ENCODE measurements at regions of chr2 and their contacts with region 1.

Region 1: GRCh38 chr2:137838255-137839092 is 125.8 kb upstream of the HNMT start:
- DNase-seq: no peak
- H3K4me3 ChIP-seq: no peak overlapping the region
- H3K27ac ChIP-seq: no peak overlapping the region
- H3K4me1 ChIP-seq: peaks cover 0 to 4% (median 0%) of the 10 kb centered on the region in 4 donors
- H3K27me3 ChIP-seq: no peaks in the 10 kb centered on the region
- CTCF ChIP-seq: peak; percentile 59 to 73 (median 67)
- EP300 ChIP-seq: no peak
- POLR2A ChIP-seq: no peak

Region 2: GRCh38 chr2:136423516-136423996 is 1414.9 kb before region 1 on chr2:
- in situ Hi-C with region 1: loop called (anchors 25 kb)
- intact Hi-C with region 1: loop called (anchors 5 kb)
- DNase-seq: peak; percentile 70
- H3K4me3 ChIP-seq: peak overlapping the region in 3 of 4 donors; percentile 11 to 50 (median 29)
- H3K27ac ChIP-seq: no peak overlapping the region
- H3K4me1 ChIP-seq: peaks cover 0 to 10% (median 0%) of the 10 kb centered on the region in 4 donors
- H3K27me3 ChIP-seq: peaks cover 21% of the 10 kb centered on the region
- CTCF ChIP-seq: peak; percentile 70 to 81 (median 80)
- EP300 ChIP-seq: no peak
- POLR2A ChIP-seq: no peak

Region 3: GRCh38 chr2:136448432-136448831 is 1390.0 kb before region 1 on chr2:
- in situ Hi-C with region 1: loop called in 2 of 4 experiments (anchors 25 kb)
- intact Hi-C with region 1: no loop called
- DNase-seq: no peak
- H3K4me3 ChIP-seq: no peak overlapping the region
- H3K27ac ChIP-seq: no peak overlapping the region
- H3K4me1 ChIP-seq: no peaks in the 10 kb centered on the region
- H3K27me3 ChIP-seq: no peaks in the 10 kb centered on the region
- CTCF ChIP-seq: no peak
- EP300 ChIP-seq: no peak
- POLR2A ChIP-seq: no peak

Region 4: GRCh38 chr2:137467246-137467862 is 371.1 kb before region 1 on chr2:
- in situ Hi-C with region 1: loop called in 3 of 4 experiments (anchors 25 kb)
- intact Hi-C with region 1: no loop called
- DNase-seq: peak; percentile 43
- H3K4me3 ChIP-seq: no peak overlapping the region
- H3K27ac ChIP-seq: no peak overlapping the region
- H3K4me1 ChIP-seq: no peaks in the 10 kb centered on the region
- H3K27me3 ChIP-seq: no peaks in the 10 kb centered on the region
- CTCF ChIP-seq: peak in 4 of 5 experiments; percentile 38 to 57 (median 54)
- EP300 ChIP-seq: no peak
- POLR2A ChIP-seq: no peak

Region 5: GRCh38 chr2:137607722-137608318 is 230.7 kb before region 1 on chr2:
- in situ Hi-C with region 1: no loop called
- intact Hi-C with region 1: no loop called
- DNase-seq: no peak
- H3K4me3 ChIP-seq: no peak overlapping the region
- H3K27ac ChIP-seq: no peak overlapping the region
- H3K4me1 ChIP-seq: no peaks in the 10 kb centered on the region
- H3K27me3 ChIP-seq: no peaks in the 10 kb centered on the region
- CTCF ChIP-seq: no peak
- EP300 ChIP-seq: no peak
- POLR2A ChIP-seq: no peak

Region 6: DNA sequence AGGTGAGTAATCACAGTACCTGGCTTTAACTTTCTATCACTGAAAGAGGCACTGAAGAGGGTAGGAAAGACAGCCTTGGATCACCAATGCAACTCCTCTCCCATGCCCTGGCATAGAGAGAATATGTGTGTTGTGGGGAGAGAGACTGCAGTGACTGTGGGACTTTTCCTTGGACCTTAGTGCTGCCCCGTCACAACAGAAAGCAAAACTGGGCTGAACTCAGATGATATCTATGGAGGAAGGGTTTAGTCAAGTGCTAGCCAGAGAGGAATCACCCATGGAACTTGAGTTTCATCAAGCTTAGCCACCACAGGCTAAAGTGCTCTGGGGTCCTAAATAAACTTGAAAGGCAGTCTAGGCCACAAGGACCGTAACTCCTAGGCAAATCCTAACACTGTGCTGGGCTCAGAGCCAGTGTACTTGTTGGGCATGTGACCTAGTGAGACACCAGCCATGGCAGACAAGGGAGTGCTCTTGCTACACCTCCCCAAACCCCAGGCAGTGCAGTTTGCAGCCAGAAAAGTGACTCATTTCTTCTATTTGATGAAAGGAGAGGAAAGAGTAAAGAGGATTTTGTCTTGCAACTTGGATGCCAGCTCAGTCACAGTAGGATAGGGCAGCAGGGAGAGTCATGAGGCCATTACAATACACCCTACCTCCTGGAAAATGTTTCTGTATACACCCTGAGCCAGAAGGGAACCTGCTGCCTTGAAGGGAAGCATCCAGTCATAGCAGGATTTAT is 557.3 kb after region 1 on chr2:
- in situ Hi-C with region 1: no loop called
- intact Hi-C with region 1: no loop called
- DNase-seq: no peak
- H3K4me3 ChIP-seq: no peak overlapping the region
- H3K27ac ChIP-seq: no peak overlapping the region
- H3K4me1 ChIP-seq: no peaks in the 10 kb centered on the region
- H3K27me3 ChIP-seq: no peaks in the 10 kb centered on the region
- CTCF ChIP-seq: no peak
- EP300 ChIP-seq: no peak
- POLR2A ChIP-seq: no peak

Region 7: DNA sequence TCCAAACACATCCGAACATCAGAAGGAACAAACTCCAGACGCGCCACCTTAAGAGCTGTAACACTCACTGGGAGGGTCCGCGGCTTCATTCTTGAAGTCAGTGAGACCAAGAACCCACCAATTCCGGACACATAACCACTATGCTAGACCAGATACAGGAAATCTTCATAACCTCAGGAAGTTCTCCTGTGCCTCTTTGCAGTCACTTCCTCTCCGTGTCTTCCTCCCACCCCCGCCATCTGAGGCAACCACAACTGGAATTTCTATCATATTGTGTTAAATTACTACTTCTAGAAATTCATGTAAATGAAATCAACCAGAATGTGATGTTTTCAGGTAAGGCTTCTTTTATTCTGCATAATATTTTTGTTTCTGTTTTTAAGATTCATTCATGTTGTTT is 1572.8 kb after region 1 on chr2:
- in situ Hi-C with region 1: no loop called
- intact Hi-C with region 1: loop called (anchors 5 kb)
- DNase-seq: no peak
- H3K4me3 ChIP-seq: no peak overlapping the region
- H3K27ac ChIP-seq: no peak overlapping the region
- H3K4me1 ChIP-seq: no peaks in the 10 kb centered on the region
- H3K27me3 ChIP-seq: no peaks in the 10 kb centered on the region
- CTCF ChIP-seq: no peak
- EP300 ChIP-seq: no peak
- POLR2A ChIP-seq: no peak